ENCODE measurements at regions of chr1 and their contacts with region 1.

Region 1: DNA sequence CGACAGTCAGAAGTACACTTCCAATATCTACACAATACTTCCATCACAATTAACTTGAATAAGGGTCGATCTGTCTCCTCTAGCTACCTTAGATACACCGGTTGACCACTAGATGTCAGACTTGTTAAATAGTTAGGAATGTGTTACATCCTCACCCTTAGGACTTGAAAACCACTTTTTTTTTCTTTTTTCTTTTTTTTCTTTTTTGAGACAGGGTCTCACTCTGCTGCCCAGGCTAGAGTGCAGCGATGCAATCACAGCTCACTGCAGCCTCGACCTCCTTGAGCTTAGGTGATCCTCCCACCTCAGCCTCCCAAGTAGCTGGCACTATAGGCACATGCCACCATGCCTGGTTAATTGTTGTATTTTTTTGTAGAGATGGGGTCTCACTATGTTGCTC is 120.4 kb upstream of the GREM2 start:
- DNase-seq: peak; percentile 80
- H3K4me3 ChIP-seq: no peak overlapping the region; a peak in 1 of 4 replicates
- H3K27ac ChIP-seq: no peak overlapping the region
- H3K4me1 ChIP-seq: no peaks in the 10 kb centered on the region
- H3K27me3 ChIP-seq: no peaks in the 10 kb centered on the region
- CTCF ChIP-seq: peak; percentile 85
- EP300 ChIP-seq: no peak
- RAD21 ChIP-seq: peak; percentile 87

Region 2: GRCh38 chr1:240691521-240692338 is 40.7 kb before region 1 on chr1:
- CTCF ChIA-PET with region 1: no interaction called
- POLR2A ChIA-PET with region 1: no interaction called
- DNase-seq: peak; percentile 69
- H3K4me3 ChIP-seq: peak overlapping the region in 1 of 2 experiments; percentile 16; a peak in 1 of 4 replicates
- H3K27ac ChIP-seq: peak overlapping the region in 1 of 2 experiments; percentile 50; a peak in 2 of 4 replicates
- H3K4me1 ChIP-seq: peaks cover 0 to 12% of the 10 kb centered on the region in 2 experiments; a peak in 2 of 4 replicates
- H3K27me3 ChIP-seq: no peaks in the 10 kb centered on the region
- CTCF ChIP-seq: peak; percentile 90
- EP300 ChIP-seq: no peak
- RAD21 ChIP-seq: peak; percentile 97

Region 3: DNA sequence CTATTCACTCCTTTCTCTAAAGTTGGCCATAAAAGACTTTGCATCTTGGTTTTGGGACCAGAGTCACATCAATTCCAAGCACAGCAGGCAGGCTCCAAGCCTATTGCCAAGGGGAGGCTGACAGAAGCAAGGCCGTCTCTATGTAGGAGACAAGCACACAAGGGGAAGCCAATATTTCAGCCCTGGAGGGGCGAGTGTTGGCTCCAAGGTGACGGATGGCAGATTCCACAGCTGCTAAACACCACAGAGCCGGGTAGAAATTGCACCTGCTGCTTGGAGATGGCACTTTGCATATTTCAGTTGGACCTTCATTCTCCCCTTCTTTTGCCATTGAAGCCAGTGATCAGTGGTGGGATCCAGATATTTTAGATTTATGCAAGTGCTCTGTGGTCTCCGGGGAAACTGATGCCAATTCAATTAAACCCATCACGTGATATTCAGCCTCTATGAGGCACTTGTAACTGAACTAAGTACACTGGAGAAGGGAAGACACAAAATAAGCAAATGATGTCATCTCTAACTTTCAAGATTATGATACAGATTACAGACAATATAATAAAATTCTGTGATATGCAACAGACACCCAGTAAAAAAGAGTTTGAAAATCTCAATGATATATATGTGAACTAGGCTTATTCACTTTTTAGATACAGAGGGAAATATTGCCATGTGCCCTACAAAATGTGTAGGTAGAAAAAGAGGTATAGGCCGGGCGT is 17.7 kb before region 1 on chr1:
- CTCF ChIA-PET with region 1: interaction called, 12 read pairs
- POLR2A ChIA-PET with region 1: no interaction called
- DNase-seq: no peak
- H3K4me3 ChIP-seq: no peak overlapping the region
- H3K27ac ChIP-seq: no peak overlapping the region
- H3K4me1 ChIP-seq: peaks cover 0 to under 1% of the 10 kb centered on the region in 2 experiments; a peak in 2 of 4 replicates
- H3K27me3 ChIP-seq: no peaks in the 10 kb centered on the region
- CTCF ChIP-seq: no peak
- EP300 ChIP-seq: no peak
- RAD21 ChIP-seq: no peak

Region 4: DNA sequence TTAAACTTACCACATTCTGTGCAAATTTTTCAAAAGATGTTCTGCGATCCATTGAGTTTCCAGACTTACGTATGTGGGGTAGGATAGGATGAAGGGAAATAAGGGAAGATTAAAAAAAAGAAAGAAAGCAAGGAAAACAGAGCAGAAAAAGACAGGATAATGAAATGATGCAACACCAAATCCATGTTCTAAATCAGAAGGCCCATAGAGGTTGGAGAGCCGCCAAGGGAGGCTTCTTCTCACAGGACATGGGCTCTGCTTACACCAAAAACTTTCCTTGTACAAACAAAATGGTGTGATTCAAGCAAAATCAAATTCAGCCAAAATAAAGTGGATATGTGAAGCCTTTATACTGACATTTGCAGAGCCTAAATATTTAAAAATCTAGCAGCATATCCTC is 69.1 kb after region 1 on chr1:
- CTCF ChIA-PET with region 1: no interaction called
- POLR2A ChIA-PET with region 1: no interaction called
- DNase-seq: no peak
- H3K4me3 ChIP-seq: no peak overlapping the region
- H3K27ac ChIP-seq: no peak overlapping the region
- H3K4me1 ChIP-seq: peaks cover 2 to 21% of the 10 kb centered on the region in 2 experiments; a peak in 2 of 4 replicates
- H3K27me3 ChIP-seq: no peaks in the 10 kb centered on the region
- CTCF ChIP-seq: no peak
- EP300 ChIP-seq: no peak
- RAD21 ChIP-seq: no peak

Region 5: GRCh38 chr1:241408170-241408569 is 675.8 kb after region 1 on chr1:
- CTCF ChIA-PET with region 1: interaction called, 13 read pairs
- POLR2A ChIA-PET with region 1: no interaction called
- DNase-seq: peak; percentile 23
- H3K4me3 ChIP-seq: no peak overlapping the region
- H3K27ac ChIP-seq: no peak overlapping the region
- H3K4me1 ChIP-seq: peaks cover 0 to 2% of the 10 kb centered on the region in 2 experiments; a peak in 2 of 4 replicates
- H3K27me3 ChIP-seq: no peaks in the 10 kb centered on the region
- CTCF ChIP-seq: peak; percentile 27
- EP300 ChIP-seq: no peak
- RAD21 ChIP-seq: peak; percentile 75

Region 6: GRCh38 chr1:241485554-241485992 is 753.2 kb after region 1 on chr1:
- CTCF ChIA-PET with region 1: interaction called, 12 read pairs
- POLR2A ChIA-PET with region 1: no interaction called
- DNase-seq: peak; percentile 17
- H3K4me3 ChIP-seq: no peak overlapping the region
- H3K27ac ChIP-seq: no peak overlapping the region
- H3K4me1 ChIP-seq: peaks cover 0 to 24% of the 10 kb centered on the region in 2 experiments; a peak in 3 of 4 replicates
- H3K27me3 ChIP-seq: no peaks in the 10 kb centered on the region
- CTCF ChIP-seq: peak; percentile 55
- EP300 ChIP-seq: no peak
- RAD21 ChIP-seq: peak; percentile 44